ENCODE measurements at regions of chr1 and their contacts with region 1.

Region 1: GRCh38 chr1:32273388-32274208 is 18.3 kb upstream of the HDAC1 start:
- DNase-seq: peak; percentile 95
- H3K4me3 Mint-ChIP-seq: peak overlapping the region; percentile 62
- H3K27ac Mint-ChIP-seq: peak overlapping the region; percentile 91
- H3K4me1 Mint-ChIP-seq: peaks cover 63% of the 10 kb centered on the region
- H3K27me3 Mint-ChIP-seq: no peaks in the 10 kb centered on the region

Region 2: GRCh38 chr1:32122151-32122550 is 151.4 kb before region 1 on chr1:
- CTCF ChIA-PET with region 1: no interaction called
- intact Hi-C with region 1: no loop called
- DNase-seq: no peak
- H3K4me3 Mint-ChIP-seq: no peak overlapping the region
- H3K27ac Mint-ChIP-seq: no peak overlapping the region
- H3K4me1 Mint-ChIP-seq: peaks cover 56% of the 10 kb centered on the region
- H3K27me3 Mint-ChIP-seq: no peaks in the 10 kb centered on the region

Region 3: DNA sequence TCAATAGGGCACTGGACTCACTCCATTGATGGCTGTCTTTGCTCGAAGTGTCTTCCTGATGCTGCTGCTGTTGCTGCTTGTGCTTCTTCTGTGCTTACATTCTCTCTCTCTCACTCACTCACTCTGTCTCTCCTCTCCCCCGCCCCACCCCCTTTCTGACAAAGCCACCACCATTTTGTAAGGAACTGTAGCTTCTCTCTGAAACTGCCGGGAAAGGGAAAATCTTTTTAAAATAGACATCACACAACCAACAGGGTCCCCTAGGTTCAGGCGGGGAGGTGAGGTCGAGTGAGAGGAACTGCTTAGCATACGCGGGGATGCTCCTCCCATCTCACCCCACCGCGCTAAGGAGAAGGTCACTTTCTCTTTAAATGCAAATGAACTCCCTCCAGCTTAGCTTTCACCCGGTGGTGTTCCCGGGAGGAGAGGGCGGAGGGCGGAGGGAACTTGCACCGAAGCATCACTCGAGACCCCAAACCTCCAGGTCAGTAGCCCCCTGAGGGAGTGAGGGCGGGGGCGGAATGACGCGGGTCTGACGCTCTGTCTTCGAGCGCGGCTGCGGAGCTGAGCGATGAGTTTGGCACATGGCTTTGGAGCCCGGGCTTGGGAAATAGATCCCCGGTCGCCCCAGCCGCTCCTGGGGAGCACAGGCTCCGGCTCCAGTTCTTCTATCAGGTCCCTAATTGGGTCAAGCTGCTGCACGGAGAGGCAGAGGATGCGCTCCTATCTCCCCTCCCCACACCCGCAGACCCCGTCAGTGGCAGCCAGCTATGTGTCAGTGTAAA is 73.2 kb before region 1 on chr1 and contains the start of gene CCDC28B:
- CTCF ChIA-PET with region 1: no interaction called
- intact Hi-C with region 1: loop called (anchors 1 kb)
- DNase-seq: peak; percentile 72
- H3K4me3 Mint-ChIP-seq: peak within 1 kb of the TSS; percentile 70
- H3K27ac Mint-ChIP-seq: peak within 1 kb of the TSS; percentile 88
- H3K4me1 Mint-ChIP-seq: peaks cover 38% of the 10 kb centered on the region
- H3K27me3 Mint-ChIP-seq: no peaks in the 10 kb centered on the region
- total RNA-seq, gene CCDC28B: 13.1 to 14.8 TPM

Measured in activated naive CD4-positive, alpha-beta T cell treated with anti-CD3 and anti-CD28 coated beads for 36 hours (primary cell).